Mammary epithelial cell (primary cell): ENCODE measurements at regions of chr2 and their contacts with region 1.

Region 1: DNA sequence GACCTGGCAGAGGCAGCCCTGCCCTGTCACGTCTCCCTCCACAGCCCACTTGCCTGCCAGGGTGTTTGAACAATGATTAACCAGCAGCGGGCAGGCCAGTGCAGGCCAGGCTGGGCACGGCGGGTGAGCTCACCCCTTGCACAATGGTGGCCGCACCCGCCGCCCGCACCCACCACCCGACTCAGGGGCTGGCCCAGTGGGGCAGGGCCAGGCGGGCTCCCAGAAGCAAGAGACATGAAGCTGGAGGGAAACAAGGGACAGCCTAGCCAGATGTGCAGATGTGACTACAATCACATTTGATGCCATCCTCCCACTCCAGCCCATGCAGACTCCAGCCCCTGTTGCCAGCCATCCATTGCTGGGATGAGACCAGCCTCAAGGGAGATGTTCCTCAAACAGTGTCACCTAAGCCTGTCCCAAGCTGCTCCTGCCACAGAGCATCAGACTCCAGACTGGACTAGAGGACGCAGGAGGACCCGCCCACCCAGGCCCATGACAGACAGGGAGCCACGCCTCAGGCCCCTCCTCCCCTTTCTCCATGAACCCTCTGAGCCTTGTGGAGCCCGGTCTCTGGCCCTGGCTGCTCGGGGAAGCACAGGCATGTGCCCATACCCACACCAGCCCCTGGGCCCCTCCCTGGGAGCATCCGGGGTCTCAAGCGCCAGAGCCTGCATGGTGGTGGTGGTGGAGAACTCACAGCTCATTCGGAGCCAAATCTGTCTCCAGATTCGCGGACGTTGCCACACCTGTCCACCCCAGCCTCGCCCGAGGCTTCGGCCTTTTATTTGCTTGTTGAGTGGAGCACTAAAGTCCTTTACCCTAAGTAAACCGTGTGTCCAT is 45.0 kb downstream of the SDC1 start:
- DNase-seq: peak; percentile 95
- H3K4me3 ChIP-seq: no peak overlapping the region
- H3K27ac ChIP-seq: peak overlapping the region; percentile 85
- H3K4me1 ChIP-seq: peaks cover 55% of the 10 kb centered on the region
- H3K27me3 ChIP-seq: no peaks in the 10 kb centered on the region
- CTCF ChIP-seq: peak; percentile 14 to 54

Region 2: DNA sequence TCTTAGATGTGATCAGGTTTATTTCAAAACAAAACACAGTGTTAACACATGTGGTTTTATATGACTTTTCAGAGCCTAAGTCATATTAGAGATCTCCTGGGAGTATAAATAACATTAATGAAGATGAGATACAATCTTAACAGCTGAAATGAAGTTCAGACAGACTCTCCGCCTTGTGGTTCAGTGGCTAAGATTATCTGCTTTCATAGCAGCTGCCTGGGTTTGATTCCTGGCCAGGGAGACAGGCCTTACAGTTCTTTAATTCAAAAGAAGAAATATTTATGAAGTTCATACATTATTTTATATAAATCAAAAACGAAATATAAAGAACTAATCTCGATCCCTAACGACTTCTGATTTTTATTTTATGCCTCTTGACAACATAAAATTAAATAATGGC is 243.0 kb before region 1 on chr2:
- CTCF ChIA-PET with region 1: no interaction called
- dilution Hi-C with region 1: no loop called
- in situ Hi-C with region 1: no loop called
- intact Hi-C with region 1: no loop called
- DNase-seq: no peak
- H3K4me3 ChIP-seq: no peak overlapping the region
- H3K27ac ChIP-seq: no peak overlapping the region
- H3K4me1 ChIP-seq: peaks cover 11% of the 10 kb centered on the region
- H3K27me3 ChIP-seq: no peaks in the 10 kb centered on the region
- CTCF ChIP-seq: no peak

Region 3: GRCh38 chr2:20141122-20141762 is 38.7 kb before region 1 on chr2:
- CTCF ChIA-PET with region 1: no interaction called
- dilution Hi-C with region 1: no loop called
- in situ Hi-C with region 1: no loop called
- intact Hi-C with region 1: loop called (anchors 1 kb)
- DNase-seq: peak; percentile 95
- H3K4me3 ChIP-seq: no peak overlapping the region
- H3K27ac ChIP-seq: peak overlapping the region; percentile 47
- H3K4me1 ChIP-seq: peaks cover 58% of the 10 kb centered on the region
- H3K27me3 ChIP-seq: no peaks in the 10 kb centered on the region
- CTCF ChIP-seq: no peak

Region 4: GRCh38 chr2:20356042-20356441 is 176.1 kb after region 1 on chr2:
- CTCF ChIA-PET with region 1: no interaction called
- dilution Hi-C with region 1: no loop called
- in situ Hi-C with region 1: no loop called
- intact Hi-C with region 1: no loop called
- DNase-seq: peak; percentile 96
- H3K4me3 ChIP-seq: no peak overlapping the region
- H3K27ac ChIP-seq: no peak overlapping the region
- H3K4me1 ChIP-seq: peaks cover 26% of the 10 kb centered on the region
- H3K27me3 ChIP-seq: no peaks in the 10 kb centered on the region
- CTCF ChIP-seq: no peak